ENCODE measurements at regions of chr17 and their contacts with region 1.

Region 1: GRCh38 chr17:55053855-55054254 is 85.3 kb downstream of the STXBP4 start:
- DNase-seq: no peak

Region 2: DNA sequence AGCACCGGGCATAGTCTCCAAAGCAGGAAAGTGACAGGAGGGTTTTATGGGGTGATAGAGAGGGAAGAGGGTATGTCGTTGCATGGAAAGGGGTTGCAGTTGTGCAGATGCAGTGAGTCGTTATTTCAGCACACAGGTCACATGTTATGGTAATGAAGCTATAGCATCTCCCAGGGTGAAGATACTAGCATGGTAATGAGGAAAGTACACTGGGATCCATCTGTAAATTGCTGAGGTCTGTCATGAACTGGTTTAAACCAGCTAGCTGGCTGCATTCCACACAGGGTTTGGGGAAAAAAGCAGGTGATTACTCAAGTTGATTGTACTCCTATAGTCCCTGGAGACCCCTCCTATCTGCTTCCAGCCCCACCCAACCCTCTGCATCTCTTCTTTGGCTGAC is 97.1 kb before region 1 on chr17:
- intact Hi-C with region 1: no loop called
- DNase-seq: no peak

Region 3: DNA sequence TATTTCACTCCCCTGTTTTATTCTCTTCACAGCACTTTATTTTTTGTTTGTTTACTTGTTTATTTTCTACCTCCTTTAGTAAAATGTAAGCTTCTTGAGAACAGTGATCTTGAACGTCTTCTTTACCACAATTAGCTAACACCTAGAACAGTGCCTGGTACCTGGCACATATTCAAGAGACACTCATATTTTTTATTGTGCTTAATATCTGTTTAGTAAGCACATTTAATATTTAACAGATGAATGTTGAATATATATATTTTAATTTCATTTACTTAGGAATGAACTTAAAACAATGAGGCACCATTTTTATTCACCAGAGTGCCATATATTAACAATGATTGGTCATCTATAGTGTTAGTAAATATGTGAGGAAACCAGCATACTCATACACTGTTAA is 44.9 kb after region 1 on chr17:
- intact Hi-C with region 1: no loop called
- DNase-seq: no peak

Region 4: DNA sequence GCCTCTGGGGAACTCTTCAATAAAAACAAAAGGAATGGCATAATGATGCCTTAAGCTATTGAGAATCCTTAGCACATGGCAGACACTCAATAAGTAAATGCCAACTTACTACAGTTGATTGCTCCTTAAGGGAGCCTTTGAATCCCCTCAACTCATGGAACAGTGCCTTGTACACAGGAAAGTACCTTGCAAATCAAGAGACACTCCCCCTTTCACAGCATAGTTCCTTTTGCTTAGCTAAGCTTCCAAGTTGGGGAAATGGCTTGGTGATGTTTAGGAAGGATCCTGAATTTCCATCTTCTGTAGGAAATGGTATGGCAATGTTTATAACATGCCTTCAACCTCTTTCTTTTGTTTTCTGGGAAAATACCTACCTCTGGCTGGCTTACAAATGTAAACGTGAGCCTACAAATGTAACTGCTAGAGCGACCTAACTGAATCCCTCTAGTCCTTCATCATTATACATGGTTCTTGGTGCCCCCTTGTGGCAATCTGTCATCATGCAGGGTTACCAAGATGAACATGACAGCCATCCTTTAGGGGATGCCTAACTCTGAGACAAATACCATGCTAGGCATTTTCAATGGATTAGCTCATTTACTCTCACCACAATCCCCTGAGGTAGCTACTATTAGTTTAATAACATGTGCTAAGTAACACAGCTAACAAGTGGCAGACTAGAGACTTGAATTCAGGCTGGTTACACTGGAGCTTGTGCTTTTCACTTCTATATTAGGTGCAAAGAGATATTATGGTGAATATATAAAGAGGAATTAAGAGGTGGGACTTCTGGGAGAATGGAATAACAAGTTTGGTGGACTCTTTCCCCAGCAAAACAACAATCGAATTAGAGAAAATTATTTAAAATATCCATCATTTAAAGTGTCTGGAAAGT is 302.8 kb after region 1 on chr17:
- intact Hi-C with region 1: loop called (anchors 10 kb)
- DNase-seq: peak in 7 of 10 donors; percentile 19 to 82 (median 72)